ENCODE measurements at regions of chr11 and their contacts with region 1.

Region 1: DNA sequence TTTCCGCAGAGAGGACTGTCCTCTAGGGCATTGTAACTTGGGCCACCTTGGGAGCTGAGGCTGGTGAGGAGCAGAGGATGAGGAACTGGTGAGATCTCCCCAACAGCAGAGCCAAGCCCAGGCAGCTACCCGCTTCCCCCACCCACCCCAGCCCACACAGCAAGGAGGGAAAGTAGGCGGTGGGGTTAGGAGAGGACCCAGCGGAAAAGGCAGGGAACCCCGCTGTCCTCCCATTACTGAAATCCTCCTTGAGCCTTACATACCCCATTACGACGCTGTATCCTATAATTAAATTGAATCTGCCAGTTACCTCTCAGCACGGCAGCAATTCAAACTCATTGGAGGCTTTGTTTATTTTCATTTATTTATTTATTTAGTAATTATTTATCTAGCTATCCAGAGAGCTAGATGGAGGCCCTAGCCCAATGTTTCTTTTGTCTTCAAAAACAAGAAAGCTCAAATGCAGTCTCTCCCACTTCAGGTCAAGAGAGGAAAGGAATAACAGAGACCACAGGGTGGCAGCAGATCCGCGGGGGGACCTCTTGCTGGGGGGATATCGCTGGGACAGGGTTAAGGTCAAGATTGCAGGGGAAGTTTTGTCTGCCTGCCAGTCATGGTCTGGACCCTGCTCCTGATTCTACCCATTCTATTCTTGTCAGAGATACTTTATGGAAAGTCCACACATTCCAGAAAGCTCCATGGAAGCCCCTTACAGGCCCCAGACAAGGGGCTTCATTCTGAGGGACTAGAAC is 218.0 kb downstream of the ST3GAL4 start:
- DNase-seq: no peak
- H3K4me3 ChIP-seq: no peak overlapping the region
- H3K27ac ChIP-seq: no peak overlapping the region
- H3K4me1 ChIP-seq: no peaks in the 10 kb centered on the region
- H3K27me3 ChIP-seq: peaks cover 0 to 4% of the 10 kb centered on the region in 2 donors
- CTCF ChIP-seq: no peak
- POLR2A ChIP-seq: no peak

Region 2: GRCh38 chr11:126186708-126187529 is 386.6 kb before region 1 on chr11:
- intact Hi-C with region 1: no loop called
- DNase-seq: no peak
- H3K4me3 ChIP-seq: no peak overlapping the region
- H3K27ac ChIP-seq: no peak overlapping the region
- H3K4me1 ChIP-seq: no peaks in the 10 kb centered on the region
- H3K27me3 ChIP-seq: no peaks in the 10 kb centered on the region
- CTCF ChIP-seq: no peak
- POLR2A ChIP-seq: no peak

Region 3: GRCh38 chr11:126601550-126602215 is 28.2 kb after region 1 on chr11:
- intact Hi-C with region 1: loop called (anchors 1 kb)
- DNase-seq: no peak
- H3K4me3 ChIP-seq: no peak overlapping the region
- H3K27ac ChIP-seq: no peak overlapping the region
- H3K4me1 ChIP-seq: no peaks in the 10 kb centered on the region
- H3K27me3 ChIP-seq: no peaks in the 10 kb centered on the region
- CTCF ChIP-seq: no peak
- POLR2A ChIP-seq: no peak